ENCODE measurements at regions of chr5 and their contacts with region 1.

Region 1: GRCh38 chr5:95554647-95555548 is at the starts of genes ARSK and SKIC3:
- DNase-seq: peak; percentile 90
- H3K4me3 Mint-ChIP-seq: peak within 1 kb of the TSS; percentile 94
- H3K27ac Mint-ChIP-seq: peak within 1 kb of the TSS; percentile 94
- H3K4me1 Mint-ChIP-seq: peaks cover 39% of the 10 kb centered on the region
- H3K27me3 Mint-ChIP-seq: no peaks in the 10 kb centered on the region
- total RNA-seq, gene ARSK: 3.9 and 4.2 TPM in 2 replicates
- total RNA-seq, gene SKIC3: 60.2 and 63.8 TPM in 2 replicates

Region 2: DNA sequence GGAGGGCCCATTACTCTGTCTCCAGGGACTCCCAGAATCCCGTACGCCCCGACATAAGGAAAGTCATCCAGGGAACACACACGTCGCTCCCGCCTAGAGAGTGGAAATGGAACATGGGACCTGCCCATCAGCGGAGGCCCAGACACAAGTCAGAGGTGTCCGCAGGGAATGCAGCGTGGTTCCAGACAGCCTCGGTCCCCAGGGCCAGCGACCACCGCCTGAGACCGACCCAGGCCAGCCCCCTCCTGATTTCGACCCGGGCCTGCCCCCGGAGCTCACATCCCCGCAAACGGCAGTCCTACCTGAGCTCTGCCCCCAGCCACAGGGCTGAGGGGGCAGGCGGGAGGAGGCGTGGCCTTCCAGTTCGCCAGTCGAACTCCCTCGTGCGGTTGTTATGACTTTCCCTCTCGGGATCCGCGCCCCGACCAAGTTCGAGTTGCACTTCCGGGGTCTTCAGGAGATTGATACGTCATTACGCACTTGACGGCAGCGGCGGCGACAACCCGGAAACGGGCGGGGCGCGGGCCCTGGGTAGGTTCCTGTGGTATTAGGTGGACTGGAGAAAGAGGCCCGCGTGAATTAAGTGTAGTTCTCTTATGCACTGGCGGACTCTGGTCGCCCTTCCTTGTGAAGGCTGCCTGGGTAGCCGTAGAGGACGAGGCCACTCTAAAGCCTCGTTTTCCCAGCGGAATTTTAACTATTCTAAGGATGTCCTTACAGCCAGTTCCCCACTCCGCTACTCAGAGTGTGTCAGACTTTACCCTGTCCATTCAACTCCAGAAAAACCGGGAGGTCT is 1443.5 kb before region 1 on chr5:
- intact Hi-C with region 1: loop called (anchors 5 kb)
- DNase-seq: peak; percentile 88
- H3K4me3 Mint-ChIP-seq: peak overlapping the region; percentile 93
- H3K27ac Mint-ChIP-seq: peak overlapping the region; percentile 89
- H3K4me1 Mint-ChIP-seq: peaks cover 31% of the 10 kb centered on the region
- H3K27me3 Mint-ChIP-seq: peaks cover 3% of the 10 kb centered on the region

Region 3: GRCh38 chr5:94815313-94816039 is 739.4 kb before region 1 on chr5:
- intact Hi-C with region 1: no loop called
- DNase-seq: no peak
- H3K4me3 Mint-ChIP-seq: no peak overlapping the region
- H3K27ac Mint-ChIP-seq: no peak overlapping the region
- H3K4me1 Mint-ChIP-seq: no peaks in the 10 kb centered on the region
- H3K27me3 Mint-ChIP-seq: peaks cover 18% of the 10 kb centered on the region

Region 4: GRCh38 chr5:95620030-95620869 is 65.4 kb after region 1 on chr5 and contains the start of gene GPR150:
- intact Hi-C with region 1: loop called (anchors 1 kb)
- DNase-seq: peak; percentile 46
- H3K4me3 Mint-ChIP-seq: peak within 1 kb of the TSS; percentile 83
- H3K27ac Mint-ChIP-seq: peak within 1 kb of the TSS; percentile 72
- H3K4me1 Mint-ChIP-seq: peaks cover 38% of the 10 kb centered on the region
- H3K27me3 Mint-ChIP-seq: peaks cover 22% of the 10 kb centered on the region
- total RNA-seq, gene GPR150: 0.22 and 0.26 TPM in 2 replicates

Region 5: GRCh38 chr5:95760273-95761191 is 205.6 kb after region 1 on chr5:
- intact Hi-C with region 1: loop called (anchors 2 kb)
- DNase-seq: no peak
- H3K4me3 Mint-ChIP-seq: peak overlapping the region; percentile 52
- H3K27ac Mint-ChIP-seq: peak overlapping the region; percentile 45
- H3K4me1 Mint-ChIP-seq: peaks cover 30% of the 10 kb centered on the region
- H3K27me3 Mint-ChIP-seq: peaks cover 22% of the 10 kb centered on the region

Region 6: DNA sequence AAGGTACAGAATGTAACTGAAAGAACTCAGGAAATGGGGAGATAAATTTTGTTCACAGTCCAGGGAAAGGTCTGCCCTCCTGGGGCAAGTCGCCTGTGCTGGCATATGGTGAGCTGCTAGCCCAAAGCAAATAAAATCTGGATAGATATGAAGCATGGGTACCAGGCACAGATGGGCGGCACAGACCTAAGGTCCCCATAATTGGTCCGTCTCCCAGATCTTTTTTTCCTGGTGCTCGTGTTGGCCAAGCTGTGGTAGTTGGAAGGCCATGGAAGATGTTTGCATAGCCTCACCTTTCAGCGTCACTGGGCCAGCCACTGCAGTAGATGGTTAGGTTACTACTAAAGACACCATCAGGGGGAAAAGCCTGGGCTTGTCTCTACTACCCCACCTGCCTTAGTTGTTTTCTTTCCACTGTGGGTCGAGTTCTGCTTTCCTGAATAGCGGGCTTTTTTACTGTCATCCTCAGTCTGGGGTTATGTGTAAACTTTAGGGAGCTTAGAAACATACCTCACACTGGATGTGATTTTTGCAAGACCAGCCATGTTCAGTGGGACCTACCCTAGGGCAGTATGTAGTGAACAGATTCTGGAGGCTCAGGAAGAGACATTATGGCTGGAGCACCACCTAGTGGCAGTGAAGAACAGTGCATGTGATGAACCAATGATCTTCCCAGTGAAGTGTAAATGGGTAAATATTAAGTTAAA is 291.8 kb after region 1 on chr5:
- intact Hi-C with region 1: loop called (anchors 5 kb)
- DNase-seq: peak; percentile 44
- H3K4me3 Mint-ChIP-seq: no peak overlapping the region
- H3K27ac Mint-ChIP-seq: no peak overlapping the region
- H3K4me1 Mint-ChIP-seq: peaks cover 37% of the 10 kb centered on the region
- H3K27me3 Mint-ChIP-seq: peaks cover 12% of the 10 kb centered on the region

Region 7: GRCh38 chr5:96807075-96807654 is 1252.3 kb after region 1 on chr5:
- intact Hi-C with region 1: loop called (anchors 1 kb)
- DNase-seq: no peak
- H3K4me3 Mint-ChIP-seq: peak overlapping the region; percentile 99
- H3K27ac Mint-ChIP-seq: peak overlapping the region; percentile 95
- H3K4me1 Mint-ChIP-seq: peaks cover 81% of the 10 kb centered on the region
- H3K27me3 Mint-ChIP-seq: no peaks in the 10 kb centered on the region

Measured in activated T-helper 1 cell treated with anti-CD3 and anti-CD28 coated beads, Interleukin-12 subunit alpha, Interleukin-12 subunit beta, Interleukin-2, Interleukin-4 antibody, amounts not matched to agents 30 ng/mL and 10 ng/mL and 1 ng/mL, durations not matched to agents 14 hours and 24 hours and 36 hours (primary cell).